ENCODE measurements at regions of chr5 and their contacts with region 1.

Region 1: GRCh38 chr5:32283539-32284377 is 29.0 kb downstream of the MTMR12 start:
- DNase-seq: no peak
- H3K4me3 Mint-ChIP-seq: no peak overlapping the region
- H3K27ac Mint-ChIP-seq: peak overlapping the region; percentile 53
- H3K4me1 Mint-ChIP-seq: peaks cover 54% of the 10 kb centered on the region
- H3K27me3 Mint-ChIP-seq: no peaks in the 10 kb centered on the region

Region 2: GRCh38 chr5:32206509-32207354 is 77.0 kb before region 1 on chr5:
- intact Hi-C with region 1: loop called (anchors 5 kb)
- DNase-seq: no peak
- H3K4me3 Mint-ChIP-seq: no peak overlapping the region
- H3K27ac Mint-ChIP-seq: no peak overlapping the region
- H3K4me1 Mint-ChIP-seq: peaks cover 23% of the 10 kb centered on the region
- H3K27me3 Mint-ChIP-seq: peaks cover 2% of the 10 kb centered on the region

Region 3: DNA sequence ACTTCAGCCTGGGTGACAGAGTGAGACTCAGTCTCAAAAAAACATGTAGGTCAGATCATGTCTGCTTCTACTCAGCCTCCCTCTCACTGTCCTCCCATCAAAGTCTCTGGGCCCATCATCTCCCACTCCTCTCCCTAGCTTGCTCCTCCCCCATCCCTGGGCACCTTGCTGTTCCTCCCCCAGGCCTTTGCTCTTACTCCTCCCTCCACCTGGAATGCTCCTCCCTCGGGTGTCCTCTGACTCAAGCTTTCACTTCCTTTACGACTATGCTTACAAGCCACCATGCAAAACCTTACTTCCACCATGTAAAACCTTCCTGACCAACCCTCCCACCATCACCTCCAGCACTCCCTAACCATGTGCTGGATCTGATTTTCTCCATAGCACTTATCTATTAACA is 22.6 kb before region 1 on chr5:
- intact Hi-C with region 1: loop called (anchors 1 kb)
- DNase-seq: peak; percentile 14
- H3K4me3 Mint-ChIP-seq: no peak overlapping the region
- H3K27ac Mint-ChIP-seq: peak overlapping the region; percentile 80
- H3K4me1 Mint-ChIP-seq: peaks cover 19% of the 10 kb centered on the region
- H3K27me3 Mint-ChIP-seq: no peaks in the 10 kb centered on the region

Region 4: GRCh38 chr5:32298059-32298415 is 14.3 kb after region 1 on chr5:
- intact Hi-C with region 1: loop called (anchors 1 kb)
- DNase-seq: no peak
- H3K4me3 Mint-ChIP-seq: peak overlapping the region; percentile 12
- H3K27ac Mint-ChIP-seq: peak overlapping the region; percentile 8
- H3K4me1 Mint-ChIP-seq: peaks cover 26% of the 10 kb centered on the region
- H3K27me3 Mint-ChIP-seq: no peaks in the 10 kb centered on the region

Region 5: DNA sequence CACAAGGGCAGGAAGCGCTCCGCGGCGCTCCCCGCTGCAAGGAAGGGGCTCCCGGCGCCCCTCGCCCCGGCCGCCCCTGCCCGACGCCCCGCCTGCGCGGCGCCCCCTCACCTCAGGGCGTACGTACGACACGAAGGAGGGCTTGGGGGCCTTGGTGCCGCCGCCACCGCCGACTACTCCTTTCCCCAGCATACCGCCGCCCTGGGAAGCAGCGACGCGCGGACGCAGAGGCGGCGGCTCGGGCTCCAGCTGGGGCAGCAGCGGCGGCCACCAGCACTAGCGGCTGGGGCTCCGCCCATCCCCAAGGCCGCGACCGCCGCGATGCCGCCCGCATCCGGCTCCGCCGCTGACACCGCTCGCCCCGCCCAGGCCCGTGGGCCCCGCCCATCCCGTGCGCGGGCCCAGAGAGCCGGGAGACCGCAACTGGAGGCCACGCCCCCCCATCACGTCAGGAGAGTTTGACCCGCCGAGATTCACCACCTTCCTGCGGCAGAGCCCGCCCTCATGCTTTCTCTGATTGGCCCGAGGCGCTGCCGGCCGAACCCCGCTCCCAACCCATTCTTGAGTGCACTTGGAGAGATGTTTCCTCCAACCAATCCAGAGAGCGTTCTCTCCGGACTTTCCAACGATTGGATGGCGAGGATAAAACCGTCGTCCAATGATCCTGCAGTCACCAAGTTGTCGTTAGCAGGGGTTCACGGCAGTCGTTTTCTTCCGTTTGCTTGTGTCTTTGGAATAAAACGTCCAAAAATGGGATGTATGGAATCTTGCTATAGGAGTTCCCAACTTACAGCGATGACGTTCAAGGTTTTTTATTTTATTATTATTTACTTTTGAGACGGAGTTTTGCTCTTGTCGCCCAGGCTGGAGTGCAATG is 29.1 kb after region 1 on chr5 and contains the start of gene MTMR12:
- intact Hi-C with region 1: loop called (anchors 1 kb)
- DNase-seq: peak; percentile 100
- H3K4me3 Mint-ChIP-seq: peak within 1 kb of the TSS; percentile 96
- H3K27ac Mint-ChIP-seq: peak within 1 kb of the TSS; percentile 95
- H3K4me1 Mint-ChIP-seq: peaks cover 38% of the 10 kb centered on the region
- H3K27me3 Mint-ChIP-seq: no peaks in the 10 kb centered on the region
- total RNA-seq, gene MTMR12: 26.2 and 29.9 TPM in 2 replicates

Region 6: DNA sequence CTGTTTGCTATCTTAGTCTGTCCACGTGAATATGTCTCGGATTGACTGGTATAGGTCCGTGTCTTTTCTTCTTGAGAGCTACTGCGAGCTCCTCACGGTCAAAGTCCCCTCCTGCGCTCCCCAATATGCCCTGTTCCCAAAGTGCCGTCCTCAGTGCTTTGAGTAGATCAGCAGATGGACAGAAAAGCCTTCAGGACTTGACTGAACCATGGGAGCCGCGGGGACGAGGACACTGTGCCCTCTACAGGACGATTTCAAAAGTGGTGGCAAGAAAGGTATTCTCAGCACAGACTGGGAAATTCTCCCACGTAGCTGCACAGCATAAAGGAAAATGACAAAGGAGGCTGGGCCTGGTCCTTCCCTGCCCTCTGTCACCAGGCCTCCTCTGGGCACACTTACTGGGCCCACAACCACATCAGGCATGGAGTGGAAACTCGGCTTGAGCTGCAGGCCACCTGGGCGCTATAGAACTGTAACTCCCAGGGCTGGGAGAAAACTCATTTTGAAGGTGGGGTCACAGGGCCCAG is 45.6 kb after region 1 on chr5:
- intact Hi-C with region 1: loop called (anchors 1 kb)
- DNase-seq: peak; percentile 40
- H3K4me3 Mint-ChIP-seq: no peak overlapping the region
- H3K27ac Mint-ChIP-seq: no peak overlapping the region
- H3K4me1 Mint-ChIP-seq: peaks cover 4% of the 10 kb centered on the region
- H3K27me3 Mint-ChIP-seq: no peaks in the 10 kb centered on the region

Region 7: DNA sequence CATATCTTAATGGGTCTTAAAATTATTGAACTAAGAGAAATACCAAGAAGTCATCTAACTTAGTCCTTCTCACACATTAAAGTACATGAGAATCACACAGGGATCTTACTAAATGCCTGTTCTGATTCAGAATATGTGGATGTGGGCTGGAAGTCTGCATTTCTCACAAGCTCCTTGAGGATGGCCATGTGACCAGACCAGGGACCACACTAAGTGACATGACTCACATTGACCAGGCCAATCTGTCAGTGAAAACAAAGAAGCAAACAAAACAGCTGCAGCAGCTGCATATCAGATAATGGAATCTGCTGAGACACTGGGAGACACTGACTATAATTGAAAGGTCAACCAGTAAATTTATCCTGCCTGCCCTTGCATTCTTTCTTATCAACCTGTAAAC is 1497.5 kb after region 1 on chr5:
- intact Hi-C with region 1: no loop called
- DNase-seq: no peak
- H3K4me3 Mint-ChIP-seq: no peak overlapping the region
- H3K27ac Mint-ChIP-seq: no peak overlapping the region
- H3K4me1 Mint-ChIP-seq: no peaks in the 10 kb centered on the region
- H3K27me3 Mint-ChIP-seq: no peaks in the 10 kb centered on the region

Measured in activated T-helper 1 cell treated with anti-CD3 and anti-CD28 coated beads, Interleukin-12 subunit alpha, Interleukin-12 subunit beta, Interleukin-2, Interleukin-4 antibody, amounts not matched to agents 30 ng/mL and 10 ng/mL and 1 ng/mL, durations not matched to agents 14 hours and 24 hours and 36 hours (primary cell).